ENCODE measurements at regions of chr21 and their contacts with region 1.

Region 1: DNA sequence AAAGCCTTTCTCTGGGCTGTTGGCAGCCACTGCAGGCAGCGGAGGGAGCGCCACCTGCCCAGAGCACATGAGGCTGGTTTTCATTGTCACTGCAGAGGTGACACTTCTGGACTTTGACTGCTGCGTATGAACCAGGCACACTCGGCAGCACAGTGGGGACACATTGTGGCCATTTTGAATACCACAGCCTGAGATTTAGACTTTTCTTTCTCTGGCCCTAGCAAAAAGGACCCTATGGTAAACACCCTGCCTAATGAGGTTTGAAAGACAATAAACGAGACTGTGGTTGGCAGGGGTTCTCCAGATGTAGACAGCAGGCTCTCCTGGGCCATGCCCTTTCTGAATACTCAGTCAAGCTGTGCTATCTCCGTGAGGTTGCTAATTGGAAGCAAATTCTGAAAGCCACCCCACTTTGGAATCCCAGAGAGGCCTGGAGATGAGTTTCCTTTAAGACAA is 12.0 kb upstream of the KCNE2 start:
- DNase-seq: no peak
- H3K4me3 ChIP-seq: no peak overlapping the region
- H3K27ac ChIP-seq: no peak overlapping the region
- H3K4me1 ChIP-seq: no peaks in the 10 kb centered on the region; a peak in 1 of 7 replicates
- H3K27me3 ChIP-seq: no peaks in the 10 kb centered on the region; a peak in 1 of 7 replicates
- CTCF ChIP-seq: peak; percentile 45 to 56 (median 51)
- EP300 ChIP-seq: no peak
- POLR2A ChIP-seq: no peak
- RAD21 ChIP-seq: peak; percentile 80 to 82

Region 2: GRCh38 chr21:34243562-34243961 is 108.3 kb before region 1 on chr21:
- CTCF ChIA-PET with region 1: interaction called, 10 read pairs
- POLR2A ChIA-PET with region 1: no interaction called
- DNase-seq: peak in 1 of 2 experiments; percentile 60
- H3K4me3 ChIP-seq: no peak overlapping the region
- H3K27ac ChIP-seq: no peak overlapping the region
- H3K4me1 ChIP-seq: no peaks in the 10 kb centered on the region
- H3K27me3 ChIP-seq: no peaks in the 10 kb centered on the region
- CTCF ChIP-seq: peak; percentile 71 to 74 (median 74)
- EP300 ChIP-seq: no peak
- POLR2A ChIP-seq: no peak
- RAD21 ChIP-seq: peak; percentile 76 to 86

Region 3: GRCh38 chr21:34336756-34337391 is 14.9 kb before region 1 on chr21:
- CTCF ChIA-PET with region 1: interaction called, 33 read pairs
- POLR2A ChIA-PET with region 1: no interaction called
- DNase-seq: peak in 1 of 2 experiments; percentile 26
- H3K4me3 ChIP-seq: no peak overlapping the region
- H3K27ac ChIP-seq: no peak overlapping the region
- H3K4me1 ChIP-seq: no peaks in the 10 kb centered on the region; a peak in 2 of 7 replicates
- H3K27me3 ChIP-seq: no peaks in the 10 kb centered on the region
- CTCF ChIP-seq: no peak
- EP300 ChIP-seq: no peak
- POLR2A ChIP-seq: no peak
- RAD21 ChIP-seq: no peak